ENCODE measurements at regions of chr10 and their contacts with region 1.

Region 1: GRCh38 chr10:88901206-88901983 is 21.4 kb downstream of the STAMBPL1 start:
- DNase-seq: no peak
- ATAC-seq: peak; percentile 83
- H3K4me3 Mint-ChIP-seq: peak overlapping the region; percentile 65
- H3K27ac Mint-ChIP-seq: peak overlapping the region; percentile 98
- H3K4me1 Mint-ChIP-seq: peaks cover 65% of the 10 kb centered on the region
- H3K27me3 Mint-ChIP-seq: no peaks in the 10 kb centered on the region
- CTCF ChIP-seq: no peak

Region 2: GRCh38 chr10:88865281-88865876 is 36.0 kb before region 1 on chr10:
- CTCF ChIA-PET with region 1: no interaction called
- POLR2A ChIA-PET with region 1: interaction called, 6 read pairs
- intact Hi-C with region 1: loop called (anchors 1 kb)
- DNase-seq: no peak
- ATAC-seq: no peak
- H3K4me3 Mint-ChIP-seq: no peak overlapping the region
- H3K27ac Mint-ChIP-seq: no peak overlapping the region
- H3K4me1 Mint-ChIP-seq: peaks cover 3% of the 10 kb centered on the region
- H3K27me3 Mint-ChIP-seq: no peaks in the 10 kb centered on the region
- CTCF ChIP-seq: no peak

Region 3: DNA sequence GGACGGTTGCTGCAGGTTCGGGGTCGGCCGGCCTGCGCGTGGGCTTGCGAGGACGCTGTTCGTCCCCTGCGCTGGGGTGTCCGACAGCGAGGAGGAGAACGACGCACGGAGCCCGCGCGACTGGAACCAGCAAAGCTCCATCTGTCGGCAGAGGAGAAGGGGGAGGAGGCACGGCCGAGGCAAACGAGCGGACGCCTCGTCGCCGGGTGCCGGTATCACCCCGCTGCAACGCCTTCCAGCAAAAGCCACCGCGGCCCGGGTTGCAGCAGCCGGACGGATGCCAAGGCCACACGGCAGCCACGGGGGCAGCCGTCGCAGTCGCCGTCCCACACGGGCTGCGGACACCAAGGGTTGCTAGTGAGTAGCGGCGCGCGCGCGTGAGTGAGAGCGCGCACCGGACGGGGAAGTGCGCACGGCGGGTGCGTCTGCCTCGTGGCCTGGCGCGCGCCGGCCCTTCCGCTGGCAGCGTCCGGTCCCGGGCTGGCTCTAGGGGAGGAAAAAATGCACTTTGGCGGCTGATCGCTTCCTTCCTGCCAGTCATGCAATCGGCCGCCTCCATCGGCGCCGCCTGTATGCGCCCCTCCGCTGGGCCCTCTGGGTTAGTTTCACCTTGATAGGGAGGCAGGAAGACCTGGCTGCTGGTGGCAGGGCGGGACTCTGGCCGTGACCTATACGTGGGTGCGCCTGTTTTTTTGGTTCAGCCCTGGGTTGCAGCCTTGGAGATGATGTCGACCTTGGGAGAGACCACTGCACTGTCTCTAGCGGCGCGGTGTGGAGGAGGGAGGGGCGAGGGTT is 20.9 kb before region 1 on chr10:
- CTCF ChIA-PET with region 1: interaction called, 15 read pairs
- POLR2A ChIA-PET with region 1: interaction called, 294 read pairs
- intact Hi-C with region 1: loop called (anchors 1 kb)
- DNase-seq: peak; percentile 77
- ATAC-seq: peak; percentile 71
- H3K4me3 Mint-ChIP-seq: peak overlapping the region; percentile 96
- H3K27ac Mint-ChIP-seq: peak overlapping the region; percentile 99
- H3K4me1 Mint-ChIP-seq: peaks cover 52% of the 10 kb centered on the region
- H3K27me3 Mint-ChIP-seq: no peaks in the 10 kb centered on the region
- CTCF ChIP-seq: no peak

Region 4: GRCh38 chr10:88886557-88886956 is 14.8 kb before region 1 on chr10:
- CTCF ChIA-PET with region 1: interaction called, 14 read pairs
- POLR2A ChIA-PET with region 1: interaction called, 294 read pairs
- intact Hi-C with region 1: loop called (anchors 1 kb)
- DNase-seq: no peak
- ATAC-seq: peak; percentile 90
- H3K4me3 Mint-ChIP-seq: peak overlapping the region; percentile 63
- H3K27ac Mint-ChIP-seq: peak overlapping the region; percentile 80
- H3K4me1 Mint-ChIP-seq: peaks cover 90% of the 10 kb centered on the region
- H3K27me3 Mint-ChIP-seq: no peaks in the 10 kb centered on the region
- CTCF ChIP-seq: no peak

Region 5: DNA sequence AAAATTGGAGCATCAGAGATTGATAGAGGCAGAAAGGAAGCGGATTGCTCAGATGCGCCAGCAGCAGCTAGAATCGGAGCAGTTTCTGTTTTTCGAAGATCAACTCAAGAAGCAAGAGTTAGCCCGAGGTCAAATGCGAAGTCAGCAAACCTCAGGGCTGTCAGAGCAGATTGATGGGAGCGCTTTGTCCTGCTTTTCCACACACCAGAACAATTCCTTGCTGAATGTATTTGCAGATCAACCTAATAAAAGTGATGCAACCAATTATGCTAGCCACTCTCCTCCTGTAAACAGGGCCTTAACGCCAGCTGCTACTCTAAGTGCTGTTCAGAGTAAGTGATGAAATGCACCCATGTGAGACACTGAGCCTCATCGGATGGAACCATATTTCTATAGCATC is 11.7 kb after region 1 on chr10:
- CTCF ChIA-PET with region 1: no interaction called
- POLR2A ChIA-PET with region 1: no interaction called
- intact Hi-C with region 1: no loop called
- DNase-seq: no peak
- ATAC-seq: no peak
- H3K4me3 Mint-ChIP-seq: no peak overlapping the region
- H3K27ac Mint-ChIP-seq: peak overlapping the region; percentile 41
- H3K4me1 Mint-ChIP-seq: no peaks in the 10 kb centered on the region
- H3K27me3 Mint-ChIP-seq: no peaks in the 10 kb centered on the region
- CTCF ChIP-seq: no peak